ENCODE measurements at regions of chr7 and their contacts with region 1.

Region 1: GRCh38 chr7:47574482-47575329 is 7.2 kb downstream of the TNS3 start:
- DNase-seq: no peak
- H3K4me3 ChIP-seq: no peak overlapping the region
- H3K4me3 Mint-ChIP-seq: peak overlapping the region; percentile 71
- H3K27ac Mint-ChIP-seq: peak overlapping the region; percentile 92
- H3K4me1 ChIP-seq: peaks cover 88% of the 10 kb centered on the region
- H3K4me1 Mint-ChIP-seq: peaks cover 70% of the 10 kb centered on the region
- H3K27me3 ChIP-seq: no peaks in the 10 kb centered on the region
- H3K27me3 Mint-ChIP-seq: no peaks in the 10 kb centered on the region
- CTCF ChIP-seq: no peak

Region 2: DNA sequence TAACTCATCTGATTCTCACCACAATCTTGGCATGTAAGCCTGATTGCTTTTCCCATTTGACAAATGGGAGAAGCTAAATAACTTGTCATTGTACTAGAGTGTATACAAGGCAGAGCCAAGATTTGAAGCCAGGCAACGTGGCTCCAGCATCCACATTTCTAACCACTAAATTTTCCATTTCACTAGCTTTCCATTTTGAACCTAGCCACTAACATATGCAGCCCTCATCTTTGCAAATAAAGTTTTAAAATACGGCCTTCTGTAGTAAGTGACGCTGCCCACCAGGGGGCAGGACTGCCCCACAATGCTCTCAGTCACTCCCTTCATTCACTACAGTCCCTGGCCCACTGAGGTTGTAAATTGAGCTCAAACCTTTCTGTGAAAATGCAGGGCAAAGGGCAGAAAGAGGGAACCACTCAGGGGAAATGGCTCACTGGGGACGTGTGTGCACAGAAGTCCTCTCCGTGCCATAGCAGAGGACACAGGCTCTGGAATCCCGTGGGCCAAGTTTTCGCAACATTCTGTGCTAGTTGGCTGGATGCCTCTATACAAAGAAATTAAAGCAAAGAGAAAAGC is 308.5 kb before region 1 on chr7:
- CTCF ChIA-PET with region 1: interaction called, 4 read pairs
- POLR2A ChIA-PET with region 1: interaction called, 3 read pairs
- intact Hi-C with region 1: loop called (anchors 5 kb)
- DNase-seq: peak; percentile 82 to 85
- H3K4me3 ChIP-seq: no peak overlapping the region
- H3K4me3 Mint-ChIP-seq: no peak overlapping the region
- H3K27ac Mint-ChIP-seq: peak overlapping the region; percentile 31
- H3K4me1 ChIP-seq: peaks cover 25% of the 10 kb centered on the region
- H3K4me1 Mint-ChIP-seq: peaks cover 17% of the 10 kb centered on the region
- H3K27me3 ChIP-seq: no peaks in the 10 kb centered on the region
- H3K27me3 Mint-ChIP-seq: no peaks in the 10 kb centered on the region
- CTCF ChIP-seq: peak; percentile 89 to 96

Region 3: DNA sequence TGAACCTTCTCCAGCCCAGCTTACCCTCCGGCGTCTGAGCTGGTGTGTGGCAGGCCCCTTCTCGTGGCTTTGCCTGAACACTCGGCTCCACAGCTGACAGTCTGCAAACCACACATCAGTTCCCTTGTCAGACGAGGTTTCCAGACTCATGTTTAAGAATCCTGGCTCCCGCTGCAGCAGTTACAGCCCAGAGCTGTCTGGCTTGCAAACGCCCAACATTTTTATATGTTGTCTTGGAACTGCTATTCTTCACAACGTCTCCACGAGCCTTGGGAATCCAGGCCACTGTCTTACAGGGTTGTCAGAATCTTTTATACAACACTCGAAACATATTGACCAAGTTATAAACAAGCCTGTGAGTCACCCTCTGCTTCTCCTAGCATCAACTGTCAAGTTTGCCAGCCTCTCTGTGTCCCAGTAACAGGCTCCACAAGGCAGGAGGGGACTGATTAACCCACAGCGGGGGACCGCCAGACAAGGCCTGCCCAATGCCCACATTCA is 60.9 kb before region 1 on chr7:
- CTCF ChIA-PET with region 1: no interaction called
- POLR2A ChIA-PET with region 1: interaction called, 3 read pairs
- intact Hi-C with region 1: loop called (anchors 1 kb)
- DNase-seq: no peak
- H3K4me3 ChIP-seq: no peak overlapping the region
- H3K4me3 Mint-ChIP-seq: no peak overlapping the region
- H3K27ac Mint-ChIP-seq: no peak overlapping the region
- H3K4me1 ChIP-seq: peaks cover 57% of the 10 kb centered on the region
- H3K4me1 Mint-ChIP-seq: peaks cover 14% of the 10 kb centered on the region
- H3K27me3 ChIP-seq: no peaks in the 10 kb centered on the region; the same call in 1 of the 2 replicates
- H3K27me3 Mint-ChIP-seq: no peaks in the 10 kb centered on the region
- CTCF ChIP-seq: no peak

Region 4: DNA sequence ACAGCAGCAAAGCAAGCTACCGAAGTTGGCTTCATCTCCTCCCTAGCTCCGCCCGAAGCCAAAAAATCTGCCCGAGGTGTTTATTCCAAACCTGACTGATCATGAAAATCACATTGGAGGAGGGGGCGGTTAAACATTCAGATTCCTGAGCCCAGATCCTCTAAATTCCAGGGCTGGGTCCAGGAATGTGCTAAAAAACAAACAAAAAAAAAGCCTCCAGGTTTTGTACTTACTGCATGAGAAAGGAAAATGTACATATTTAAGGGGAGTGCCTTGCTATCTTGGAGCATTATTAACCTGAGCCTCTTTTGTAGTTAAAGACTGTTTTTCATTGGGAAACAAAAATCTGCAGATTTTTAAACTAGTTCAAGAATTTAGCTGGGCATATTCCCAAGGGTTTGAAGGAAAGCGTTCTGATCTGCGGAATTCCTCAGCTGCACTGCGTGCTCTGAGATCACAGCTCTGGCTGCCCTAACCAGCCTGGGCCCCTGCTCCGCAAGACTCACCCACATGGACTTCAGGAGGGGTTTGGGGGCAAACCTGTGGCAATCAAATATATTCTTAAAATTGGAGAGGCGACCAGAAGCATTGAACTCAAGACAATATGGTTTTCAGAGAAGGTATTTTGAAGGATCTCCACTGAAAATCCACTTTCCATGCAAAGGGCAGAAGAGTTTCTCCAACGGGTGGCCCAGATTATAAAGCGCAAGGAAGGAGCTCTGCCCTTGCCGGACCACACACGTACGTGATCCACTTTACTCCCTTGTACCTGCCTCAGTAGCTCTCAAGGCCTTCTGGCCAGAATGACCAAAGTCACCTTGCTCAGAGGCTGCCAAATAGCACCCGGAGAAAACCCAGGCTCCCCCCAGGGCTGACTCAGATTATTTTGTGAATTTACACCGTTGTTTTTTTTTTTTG is 17.2 kb after region 1 on chr7:
- CTCF ChIA-PET with region 1: interaction called, 6 read pairs
- POLR2A ChIA-PET with region 1: interaction called, 7 read pairs
- intact Hi-C with region 1: loop called (anchors 1 kb)
- DNase-seq: peak; percentile 87 to 92
- H3K4me3 ChIP-seq: 0 out of 2 replicates have a peak overlapping the region, but pooled peaks have one; percentile 9
- H3K4me3 Mint-ChIP-seq: peak overlapping the region; percentile 65
- H3K27ac Mint-ChIP-seq: peak overlapping the region; percentile 86
- H3K4me1 ChIP-seq: peaks cover 64% of the 10 kb centered on the region
- H3K4me1 Mint-ChIP-seq: peaks cover 41% of the 10 kb centered on the region
- H3K27me3 ChIP-seq: no peaks in the 10 kb centered on the region
- H3K27me3 Mint-ChIP-seq: no peaks in the 10 kb centered on the region
- CTCF ChIP-seq: no peak

Region 5: GRCh38 chr7:47661051-47661714 is 86.5 kb after region 1 on chr7:
- CTCF ChIA-PET with region 1: interaction called, 5 read pairs
- POLR2A ChIA-PET with region 1: interaction called, 3 read pairs
- intact Hi-C with region 1: loop called (anchors 2 kb)
- DNase-seq: no peak
- H3K4me3 ChIP-seq: no peak overlapping the region
- H3K4me3 Mint-ChIP-seq: no peak overlapping the region
- H3K27ac Mint-ChIP-seq: peak overlapping the region; percentile 55
- H3K4me1 ChIP-seq: peaks cover 52% of the 10 kb centered on the region
- H3K4me1 Mint-ChIP-seq: peaks cover 30% of the 10 kb centered on the region
- H3K27me3 ChIP-seq: no peaks in the 10 kb centered on the region
- H3K27me3 Mint-ChIP-seq: no peaks in the 10 kb centered on the region
- CTCF ChIP-seq: no peak

Region 6: GRCh38 chr7:47778153-47778661 is 203.5 kb after region 1 on chr7:
- CTCF ChIA-PET with region 1: no interaction called
- POLR2A ChIA-PET with region 1: no interaction called
- intact Hi-C with region 1: loop called (anchors 1 kb)
- DNase-seq: peak in 1 of 2 experiments; percentile 63
- H3K4me3 ChIP-seq: no peak overlapping the region
- H3K4me3 Mint-ChIP-seq: no peak overlapping the region
- H3K27ac Mint-ChIP-seq: peak overlapping the region; percentile 71
- H3K4me1 ChIP-seq: peaks cover 83% of the 10 kb centered on the region
- H3K4me1 Mint-ChIP-seq: peaks cover 75% of the 10 kb centered on the region
- H3K27me3 ChIP-seq: no peaks in the 10 kb centered on the region
- H3K27me3 Mint-ChIP-seq: no peaks in the 10 kb centered on the region
- CTCF ChIP-seq: no peak